Activated naive CD4-positive, alpha-beta T cell treated with anti-CD3 and anti-CD28 coated beads for 36 hours (primary cell): ENCODE measurements at regions of chr1 and their contacts with region 1.

Region 1: DNA sequence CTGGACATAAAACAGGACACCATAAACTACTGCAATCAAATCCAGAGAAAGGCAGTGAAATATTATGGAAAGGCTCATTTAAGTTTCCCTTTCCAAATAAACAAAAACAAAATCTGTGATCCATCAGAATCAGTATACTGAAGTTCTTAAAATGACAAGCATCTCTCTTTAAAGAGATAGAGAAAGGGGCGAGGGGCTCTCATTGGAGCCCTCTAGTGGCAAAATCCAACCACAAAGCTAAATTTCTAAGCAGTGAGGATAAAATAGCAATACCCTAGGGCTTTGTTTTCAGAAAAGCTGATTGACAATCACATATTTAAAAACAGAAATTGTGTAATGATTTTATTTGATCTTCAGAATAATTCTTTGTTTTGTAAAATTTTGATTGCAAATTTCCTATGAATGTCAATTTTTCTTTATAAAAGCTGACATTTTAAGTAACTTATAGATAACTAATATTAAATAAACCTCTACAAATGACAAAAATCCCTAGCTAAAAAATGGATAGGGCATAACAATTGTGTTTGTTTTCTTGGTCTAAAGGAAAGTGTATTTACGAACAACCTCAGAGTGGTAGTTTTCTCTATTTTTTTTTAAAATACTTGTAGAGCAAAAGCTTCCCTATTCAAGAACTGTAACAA is 138.2 kb downstream of the COL24A1 start:
- DNase-seq: peak; percentile 13
- H3K4me3 Mint-ChIP-seq: no peak overlapping the region
- H3K27ac Mint-ChIP-seq: no peak overlapping the region
- H3K4me1 Mint-ChIP-seq: no peaks in the 10 kb centered on the region
- H3K27me3 Mint-ChIP-seq: no peaks in the 10 kb centered on the region

Region 2: GRCh38 chr1:85607126-85607912 is 411.1 kb before region 1 on chr1:
- CTCF ChIA-PET with region 1: no interaction called
- intact Hi-C with region 1: loop called (anchors 10 kb)
- DNase-seq: no peak
- H3K4me3 Mint-ChIP-seq: no peak overlapping the region
- H3K27ac Mint-ChIP-seq: no peak overlapping the region
- H3K4me1 Mint-ChIP-seq: no peaks in the 10 kb centered on the region
- H3K27me3 Mint-ChIP-seq: no peaks in the 10 kb centered on the region

Region 3: DNA sequence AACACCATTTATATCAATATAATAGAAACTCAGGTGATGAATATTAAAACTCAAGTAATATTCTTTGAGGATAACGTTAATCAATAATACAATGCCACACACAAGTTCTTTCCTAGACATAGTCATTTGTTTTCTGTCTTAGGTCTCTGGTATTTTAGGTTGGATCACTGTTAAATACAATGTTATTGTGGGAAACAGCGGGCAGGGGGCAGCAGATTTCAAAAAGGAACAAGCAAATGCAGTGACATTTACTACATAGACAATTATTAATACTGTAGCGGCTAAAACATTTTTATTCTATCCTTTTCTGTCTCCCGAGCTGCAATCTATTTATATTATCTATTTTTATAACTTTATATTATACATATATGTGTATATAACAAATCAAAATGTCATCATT is 123.8 kb before region 1 on chr1:
- CTCF ChIA-PET with region 1: no interaction called
- intact Hi-C with region 1: loop called (anchors 5 kb)
- DNase-seq: peak; percentile 30
- H3K4me3 Mint-ChIP-seq: no peak overlapping the region
- H3K27ac Mint-ChIP-seq: no peak overlapping the region
- H3K4me1 Mint-ChIP-seq: no peaks in the 10 kb centered on the region
- H3K27me3 Mint-ChIP-seq: peaks cover 2% of the 10 kb centered on the region

Region 4: DNA sequence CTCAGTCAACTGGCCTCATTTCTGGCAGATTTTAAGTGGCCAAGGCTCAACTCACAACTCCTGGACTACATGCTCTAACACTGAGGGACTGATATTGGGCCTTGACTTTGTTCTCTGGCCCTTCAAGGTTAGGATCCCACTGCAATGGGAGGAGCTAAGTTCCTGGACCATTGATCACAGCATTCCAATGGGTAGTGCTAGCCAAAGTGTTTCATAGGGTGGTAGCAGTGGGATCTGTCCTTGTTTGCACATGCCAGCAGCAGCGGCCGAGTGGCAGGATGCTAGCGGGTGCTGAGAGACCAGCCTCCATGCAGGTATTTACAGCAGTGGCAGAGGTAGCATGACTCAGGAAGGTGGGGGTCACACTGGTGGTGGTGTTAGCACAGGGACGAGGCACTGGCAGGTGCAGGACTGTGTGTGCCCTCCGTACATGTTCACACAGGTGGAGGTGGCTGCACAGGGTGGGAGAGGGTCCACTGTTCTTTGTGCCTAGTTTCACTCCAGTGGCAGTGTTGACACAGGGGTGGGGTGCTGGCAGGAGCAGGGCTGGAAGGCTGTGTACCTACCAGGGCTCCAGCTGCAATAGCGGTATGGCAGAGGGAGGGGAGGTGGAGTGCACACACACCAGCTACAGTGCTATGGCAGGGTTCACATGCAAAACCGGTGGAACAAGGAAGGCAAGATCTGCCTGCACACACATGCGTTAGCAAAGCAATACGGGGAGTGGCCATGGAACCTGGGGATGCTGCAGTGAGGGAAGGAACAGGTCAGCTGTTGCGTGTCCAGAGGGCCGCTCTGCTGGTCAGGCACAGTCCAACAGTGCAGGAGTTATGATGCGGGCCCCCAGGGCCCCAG is 86.4 kb after region 1 on chr1:
- CTCF ChIA-PET with region 1: no interaction called
- intact Hi-C with region 1: no loop called
- DNase-seq: no peak
- H3K4me3 Mint-ChIP-seq: no peak overlapping the region
- H3K27ac Mint-ChIP-seq: no peak overlapping the region
- H3K4me1 Mint-ChIP-seq: no peaks in the 10 kb centered on the region
- H3K27me3 Mint-ChIP-seq: peaks cover 2% of the 10 kb centered on the region

Region 5: GRCh38 chr1:86277936-86278335 is 259.5 kb after region 1 on chr1:
- CTCF ChIA-PET with region 1: no interaction called
- intact Hi-C with region 1: no loop called
- DNase-seq: no peak
- H3K4me3 Mint-ChIP-seq: no peak overlapping the region
- H3K27ac Mint-ChIP-seq: no peak overlapping the region
- H3K4me1 Mint-ChIP-seq: no peaks in the 10 kb centered on the region
- H3K27me3 Mint-ChIP-seq: no peaks in the 10 kb centered on the region